Aorta (tissue), 5 donors: ENCODE measurements at regions of chr13 and their contacts with region 1.

Region 1: DNA sequence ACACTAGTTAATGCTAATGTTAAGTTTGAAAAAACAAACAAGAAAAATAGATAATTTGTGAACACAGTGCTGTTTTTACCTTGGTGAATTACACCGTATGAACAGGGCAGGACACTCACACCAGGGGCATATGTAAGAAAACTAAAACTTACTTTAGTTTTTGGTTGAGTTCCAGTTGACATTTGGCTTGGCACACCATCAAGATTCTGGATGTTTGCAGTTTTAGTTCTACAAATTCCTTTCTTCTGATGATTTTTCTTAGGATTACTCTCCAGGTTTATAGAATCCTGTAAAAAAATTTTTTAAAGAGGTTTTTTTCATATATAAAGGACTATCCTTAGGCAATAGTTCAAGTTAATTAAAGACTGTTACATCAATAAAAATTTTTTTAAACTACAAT is 238.5 kb upstream of the STARD13 start:
- DNase-seq: no peak
- ATAC-seq: no peak
- H3K4me3 ChIP-seq: no peak overlapping the region
- H3K27ac ChIP-seq: no peak overlapping the region
- H3K4me1 ChIP-seq: peaks cover 0 to 2% of the 10 kb centered on the region in 2 donors
- H3K27me3 ChIP-seq: no peaks in the 10 kb centered on the region

Region 2: GRCh38 chr13:33349986-33350826 is 173.9 kb before region 1 on chr13:
- intact Hi-C with region 1: loop called in 1 of 2 experiments (anchors 10 kb)
- DNase-seq: peak; percentile 81 to 89
- ATAC-seq: peak; percentile 85
- H3K4me3 ChIP-seq: peak overlapping the region; percentile 74 to 84
- H3K27ac ChIP-seq: peak overlapping the region; percentile 33 to 84
- H3K4me1 ChIP-seq: no peaks in the 10 kb centered on the region
- H3K27me3 ChIP-seq: no peaks in the 10 kb centered on the region

Region 3: GRCh38 chr13:33454844-33455705 is 69.0 kb before region 1 on chr13:
- intact Hi-C with region 1: loop called in 1 of 2 experiments (anchors 5 kb)
- DNase-seq: no peak
- ATAC-seq: peak; percentile 58
- H3K4me3 ChIP-seq: no peak overlapping the region
- H3K27ac ChIP-seq: peak overlapping the region; percentile 83 to 87
- H3K4me1 ChIP-seq: peaks cover 7 to 12% of the 10 kb centered on the region in 2 donors
- H3K27me3 ChIP-seq: no peaks in the 10 kb centered on the region

Region 4: DNA sequence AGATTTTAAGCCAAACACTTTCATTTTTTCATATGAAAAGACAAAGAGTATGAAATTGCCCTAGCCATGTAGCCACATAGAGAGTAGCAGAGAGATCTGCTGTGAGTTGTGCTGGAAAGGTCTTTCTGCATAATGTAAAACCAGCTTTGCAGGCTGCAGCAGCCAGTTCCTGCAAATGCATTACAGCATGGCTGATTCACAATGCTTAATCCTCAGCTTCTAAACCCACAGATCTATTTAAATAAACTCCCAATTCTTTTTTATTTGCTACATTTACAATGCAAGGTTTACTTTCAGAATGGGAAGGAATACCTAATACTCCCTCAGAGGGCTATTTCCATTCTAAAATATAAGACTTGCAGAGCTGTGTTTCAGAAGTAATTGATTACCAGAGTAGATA is 52.9 kb before region 1 on chr13:
- intact Hi-C with region 1: no loop called
- DNase-seq: no peak
- ATAC-seq: no peak
- H3K4me3 ChIP-seq: no peak overlapping the region
- H3K27ac ChIP-seq: no peak overlapping the region
- H3K4me1 ChIP-seq: no peaks in the 10 kb centered on the region
- H3K27me3 ChIP-seq: no peaks in the 10 kb centered on the region

Region 5: DNA sequence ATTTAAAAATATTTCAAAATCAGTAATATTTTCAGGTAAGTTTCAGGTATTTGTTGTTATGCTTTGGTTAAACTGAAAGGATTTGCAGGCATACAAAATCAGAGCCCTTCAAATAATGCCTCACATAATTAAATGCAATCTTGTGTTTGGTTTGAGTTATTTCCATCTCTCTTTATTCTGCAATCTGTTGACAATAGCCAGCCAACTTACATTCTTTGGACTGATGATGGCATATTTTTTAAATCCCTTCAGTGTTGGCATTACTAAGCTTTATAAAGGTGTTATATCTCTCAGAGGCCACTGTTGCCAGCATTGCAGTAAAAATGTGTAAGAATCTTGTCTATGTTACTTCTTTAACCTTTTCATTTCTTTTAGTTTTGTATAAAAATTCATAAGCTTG is 36.6 kb after region 1 on chr13:
- intact Hi-C with region 1: no loop called
- DNase-seq: no peak
- ATAC-seq: no peak
- H3K4me3 ChIP-seq: no peak overlapping the region
- H3K27ac ChIP-seq: no peak overlapping the region
- H3K4me1 ChIP-seq: no peaks in the 10 kb centered on the region
- H3K27me3 ChIP-seq: no peaks in the 10 kb centered on the region